ENCODE measurements at regions of chr4 and their contacts with region 1.

Region 1: DNA sequence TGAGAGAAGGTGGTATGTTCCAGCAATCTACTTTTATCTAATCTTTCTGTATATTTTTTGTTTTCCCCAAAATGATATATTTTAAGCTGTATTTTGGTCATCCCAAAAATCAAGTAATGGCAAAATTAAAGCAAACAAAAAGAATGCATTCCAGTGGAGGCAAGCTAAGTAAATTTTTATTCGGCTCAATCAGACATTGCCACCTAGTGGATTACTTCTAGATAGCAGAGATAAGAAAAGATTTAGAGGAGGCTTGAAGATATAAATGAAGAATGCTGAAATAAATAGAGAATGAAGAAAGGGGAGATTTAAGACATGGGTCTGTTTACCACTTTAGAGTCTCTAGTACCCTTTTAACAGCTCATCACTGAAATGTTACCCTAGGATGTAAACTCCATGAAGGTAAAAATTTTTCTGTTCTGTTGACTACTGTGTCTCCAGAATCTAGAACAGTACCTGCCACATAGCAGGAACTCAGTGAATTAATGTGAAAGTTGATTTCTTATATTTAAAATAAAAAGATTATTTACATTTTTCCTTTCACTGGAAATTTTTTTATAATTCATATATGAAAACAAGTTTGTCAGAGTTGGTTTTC is 110.9 kb upstream of the ANK2 start:
- DNase-seq: peak in 1 of 42 donors; percentile 56

Region 2: GRCh38 chr4:112636688-112637551 is 301.6 kb before region 1 on chr4 and contains the starts of genes LARP7 and ZGRF1:
- intact Hi-C with region 1: loop called (anchors 10 kb)
- DNase-seq: peak; percentile 95 to 99 (median 98)

Region 3: DNA sequence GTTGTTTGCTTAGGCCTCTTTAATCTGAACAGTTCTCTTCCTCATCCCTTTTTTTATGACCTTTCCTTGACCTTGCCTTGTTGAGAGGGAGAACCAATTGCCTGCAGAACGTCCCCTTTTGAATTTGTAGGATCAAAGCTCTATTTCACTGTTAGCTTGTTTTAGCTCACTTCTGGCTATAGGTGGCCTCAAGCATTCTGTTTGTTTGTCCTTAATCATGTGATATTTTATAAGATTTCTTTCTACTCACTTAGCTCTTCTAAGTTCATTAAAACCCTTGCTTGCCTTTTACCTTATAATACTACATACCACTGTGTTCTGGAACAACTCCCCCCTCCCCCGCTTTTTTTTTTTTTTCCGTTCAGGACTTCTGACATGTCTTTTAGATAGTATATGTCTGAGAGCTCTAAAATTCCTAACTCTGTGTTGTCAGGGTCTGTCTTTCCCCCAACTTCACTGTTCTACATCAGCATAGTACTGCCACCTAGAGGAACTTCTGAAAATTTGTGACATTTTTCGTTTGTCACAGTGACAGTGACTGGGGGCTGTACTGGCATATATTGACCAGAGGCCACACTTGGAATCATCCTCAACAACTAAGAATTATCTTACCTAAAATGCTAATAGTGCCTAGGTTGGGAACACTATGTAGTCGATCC is 173.1 kb before region 1 on chr4:
- intact Hi-C with region 1: loop called (anchors 5 kb)
- DNase-seq: peak in 1 of 42 donors; percentile 21

Region 4: DNA sequence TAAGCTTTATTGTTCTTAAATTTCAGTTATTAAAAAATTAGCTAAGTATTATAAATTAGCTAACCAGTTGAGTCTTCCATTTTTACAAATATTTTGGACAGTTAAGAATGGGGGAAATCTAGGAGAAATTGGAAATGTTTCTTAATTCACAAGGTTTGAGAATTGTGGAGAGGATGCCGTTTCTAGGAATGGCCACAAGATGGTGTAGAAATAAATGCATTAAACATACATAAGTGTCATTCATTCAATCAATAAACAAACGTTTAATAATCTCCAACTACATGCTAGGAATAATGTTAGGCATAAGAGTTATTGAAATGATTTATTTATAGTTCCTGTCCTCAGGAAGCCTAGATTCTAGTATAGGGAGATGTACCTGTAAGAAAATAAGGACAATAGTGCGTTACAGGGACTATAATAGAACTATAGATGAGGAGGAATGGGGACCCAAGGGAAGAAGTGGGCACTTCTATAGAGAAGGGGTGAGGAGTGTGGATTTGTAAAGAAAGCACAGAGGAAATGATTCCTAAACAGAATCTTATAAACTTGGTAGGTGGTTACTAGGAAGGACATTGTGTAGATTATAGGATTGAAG is 84.8 kb before region 1 on chr4:
- intact Hi-C with region 1: loop called (anchors 5 kb)
- DNase-seq: peak in 1 of 42 donors; percentile 55

Region 5: GRCh38 chr4:113094802-113095201 is 156.2 kb after region 1 on chr4:
- intact Hi-C with region 1: loop called (anchors 10 kb)
- DNase-seq: peak in 4 of 42 donors; percentile 6 to 34 (median 24)

Measured in head of caudate nucleus (tissue), 42 donors.